ENCODE measurements at regions of chr9 and their contacts with region 1.

Region 1: DNA sequence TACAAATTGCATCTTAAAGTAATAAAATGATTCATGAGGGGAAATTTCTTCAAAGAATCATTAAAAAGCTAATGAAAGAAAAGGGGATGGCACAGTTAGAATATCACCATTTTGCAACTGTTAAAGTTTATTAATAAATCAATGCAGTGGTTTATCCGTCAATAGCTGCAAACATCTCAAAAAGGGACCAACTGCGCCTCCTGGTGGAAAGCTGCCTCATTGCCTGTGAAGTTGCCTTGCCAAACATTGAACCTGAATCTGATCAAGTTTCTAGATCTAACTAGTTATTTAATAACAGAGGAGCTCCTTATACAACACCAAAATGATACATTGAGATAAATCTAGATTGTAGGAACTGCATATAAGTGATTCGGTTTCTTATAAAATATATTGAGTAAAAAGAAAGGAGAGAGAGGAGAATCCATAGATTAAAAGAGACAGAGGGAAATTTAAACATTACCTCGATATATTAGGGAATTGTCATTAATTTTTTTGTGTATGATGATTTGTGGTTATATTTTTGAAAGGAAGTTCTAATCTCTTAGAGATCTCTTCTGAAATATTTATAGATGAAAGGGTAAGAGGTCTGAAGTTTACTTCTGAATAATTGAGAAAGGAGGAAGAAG is 6.9 kb upstream of the NDUFB6 start:
- DNase-seq: peak in 1 of 2 experiments; percentile 82
- H3K4me3 ChIP-seq: no peak overlapping the region
- H3K27ac ChIP-seq: no peak overlapping the region
- H3K4me1 ChIP-seq: no peaks in the 10 kb centered on the region
- H3K27me3 ChIP-seq: no peaks in the 10 kb centered on the region
- CTCF ChIP-seq: peak; percentile 70 to 81 (median 76)
- EP300 ChIP-seq: no peak
- POLR2A ChIP-seq: no peak
- RAD21 ChIP-seq: peak; percentile 74 to 75

Region 2: GRCh38 chr9:32384364-32385151 is 195.3 kb before region 1 on chr9 and contains the start of gene ACO1:
- CTCF ChIA-PET with region 1: interaction called, 248 read pairs
- POLR2A ChIA-PET with region 1: interaction called, 5 read pairs
- DNase-seq: peak; percentile 64 to 93
- H3K4me3 ChIP-seq: peak within 1 kb of the TSS; percentile 78 to 98 (median 89)
- H3K27ac ChIP-seq: no peak within 1 kb of the TSS
- H3K4me1 ChIP-seq: peaks cover 0 to 4% (median 3%) of the 10 kb centered on the region in 4 experiments; a peak in 3 of 7 replicates
- H3K27me3 ChIP-seq: peaks cover 2 to 15% (median 8%) of the 10 kb centered on the region in 4 experiments
- CTCF ChIP-seq: peak in 1 of 3 experiments; percentile 8; a peak in 1 of 4 replicates
- EP300 ChIP-seq: no peak
- POLR2A ChIP-seq: peak in 1 of 2 experiments; percentile 56; a peak in 2 of 3 replicates
- RAD21 ChIP-seq: no peak
- total RNA-seq, gene ACO1: 45.4 and 49.8 TPM in 2 replicates

Region 3: GRCh38 chr9:32566770-32567169 is 13.0 kb before region 1 on chr9:
- CTCF ChIA-PET with region 1: interaction called, 24 read pairs
- POLR2A ChIA-PET with region 1: no interaction called
- DNase-seq: no peak
- H3K4me3 ChIP-seq: no peak overlapping the region
- H3K27ac ChIP-seq: no peak overlapping the region
- H3K4me1 ChIP-seq: peaks cover 0 to 2% (median 0%) of the 10 kb centered on the region in 4 experiments; a peak in 1 of 7 replicates
- H3K27me3 ChIP-seq: no peaks in the 10 kb centered on the region
- CTCF ChIP-seq: no peak
- EP300 ChIP-seq: no peak
- POLR2A ChIP-seq: no peak
- RAD21 ChIP-seq: no peak

Region 4: GRCh38 chr9:32703635-32704034 is 123.8 kb after region 1 on chr9:
- CTCF ChIA-PET with region 1: interaction called, 35 read pairs
- POLR2A ChIA-PET with region 1: no interaction called
- DNase-seq: no peak
- H3K4me3 ChIP-seq: no peak overlapping the region
- H3K27ac ChIP-seq: no peak overlapping the region
- H3K4me1 ChIP-seq: no peaks in the 10 kb centered on the region
- H3K27me3 ChIP-seq: no peaks in the 10 kb centered on the region
- CTCF ChIP-seq: peak; percentile 46 to 70 (median 59)
- EP300 ChIP-seq: no peak
- POLR2A ChIP-seq: no peak
- RAD21 ChIP-seq: peak; percentile 56 to 61

Region 5: GRCh38 chr9:32783169-32783891 is 203.5 kb after region 1 on chr9 and contains the start of gene TMEM215:
- CTCF ChIA-PET with region 1: interaction called, 10 read pairs
- POLR2A ChIA-PET with region 1: no interaction called
- DNase-seq: peak; percentile 41 to 85
- H3K4me3 ChIP-seq: peak within 1 kb of the TSS; percentile 41 to 78 (median 64)
- H3K27ac ChIP-seq: no peak within 1 kb of the TSS
- H3K4me1 ChIP-seq: peaks cover 0 to 5% (median 2%) of the 10 kb centered on the region in 4 experiments; a peak in 4 of 7 replicates
- H3K27me3 ChIP-seq: peaks cover 7 to 40% (median 29%) of the 10 kb centered on the region in 4 experiments
- CTCF ChIP-seq: peak in 2 of 3 experiments; percentile 6 to 30; a peak in 2 of 4 replicates
- EP300 ChIP-seq: no peak
- POLR2A ChIP-seq: no peak
- RAD21 ChIP-seq: peak in 1 of 2 experiments; percentile 35; a peak in 2 of 4 replicates
- total RNA-seq, gene TMEM215: 0.36 and 0.67 TPM in 2 replicates

Region 6: GRCh38 chr9:32968101-32969011 is 388.5 kb after region 1 on chr9:
- CTCF ChIA-PET with region 1: interaction called, 63 read pairs
- POLR2A ChIA-PET with region 1: interaction called, 3 read pairs
- DNase-seq: peak in 1 of 2 experiments; percentile 81
- H3K4me3 ChIP-seq: no peak overlapping the region
- H3K27ac ChIP-seq: no peak overlapping the region
- H3K4me1 ChIP-seq: peaks cover 0 to 3% (median 0%) of the 10 kb centered on the region in 4 experiments; a peak in 1 of 7 replicates
- H3K27me3 ChIP-seq: no peaks in the 10 kb centered on the region
- CTCF ChIP-seq: peak in 2 of 3 experiments; percentile 55 to 61; a peak in 3 of 4 replicates
- EP300 ChIP-seq: no peak
- POLR2A ChIP-seq: no peak
- RAD21 ChIP-seq: peak; percentile 77 to 79